Activated CD4-positive, alpha-beta memory T cell treated with anti-CD3 and anti-CD28 coated beads for 36 hours (primary cell): ENCODE measurements at regions of chr11 and their contacts with region 1.

Region 1: GRCh38 chr11:128379587-128380580 is 207.5 kb downstream of the ETS1 start:
- DNase-seq: peak; percentile 57
- H3K4me3 Mint-ChIP-seq: peak overlapping the region; percentile 11
- H3K27ac Mint-ChIP-seq: peak overlapping the region; percentile 56
- H3K4me1 Mint-ChIP-seq: peaks cover 41% of the 10 kb centered on the region
- H3K27me3 Mint-ChIP-seq: no peaks in the 10 kb centered on the region

Region 2: DNA sequence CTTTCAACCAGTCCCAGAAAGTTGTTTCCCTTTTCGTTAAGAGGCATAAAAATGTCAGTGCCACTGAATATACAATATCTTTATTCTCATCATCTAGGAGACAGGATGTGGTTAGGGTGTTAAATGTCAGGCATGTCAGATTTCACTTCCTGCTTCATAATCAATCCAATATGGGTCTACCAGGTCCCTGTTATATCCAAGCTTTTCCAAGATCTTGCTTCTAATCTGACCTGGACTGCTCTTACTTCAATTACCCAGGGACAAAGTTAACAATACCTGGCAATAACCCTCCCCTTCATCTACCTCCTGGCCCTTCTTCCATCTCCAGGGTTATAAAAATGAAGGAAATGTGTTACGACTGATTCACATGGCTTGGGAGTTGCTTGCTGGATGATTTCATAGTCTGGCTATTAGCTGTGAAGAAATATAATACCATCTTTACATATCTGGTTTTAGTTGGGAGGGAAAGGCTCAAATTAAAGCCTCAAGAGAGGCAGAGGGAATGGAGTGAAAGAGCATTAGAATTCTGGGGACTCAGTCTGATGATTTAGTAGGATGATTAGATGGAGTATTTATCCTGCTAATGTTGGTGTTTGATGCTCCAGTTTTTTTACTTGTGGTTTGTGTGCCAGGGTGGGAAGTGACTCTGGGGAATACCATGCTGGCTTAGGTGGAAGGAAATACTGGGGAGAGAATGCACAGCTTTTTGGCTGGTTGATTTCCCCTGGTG is 326.8 kb before region 1 on chr11:
- CTCF ChIA-PET with region 1: no interaction called
- POLR2A ChIA-PET with region 1: no interaction called
- intact Hi-C with region 1: no loop called
- DNase-seq: no peak
- H3K4me3 Mint-ChIP-seq: peak overlapping the region; percentile 70
- H3K27ac Mint-ChIP-seq: peak overlapping the region; percentile 94
- H3K4me1 Mint-ChIP-seq: peaks cover 67% of the 10 kb centered on the region
- H3K27me3 Mint-ChIP-seq: no peaks in the 10 kb centered on the region

Region 3: DNA sequence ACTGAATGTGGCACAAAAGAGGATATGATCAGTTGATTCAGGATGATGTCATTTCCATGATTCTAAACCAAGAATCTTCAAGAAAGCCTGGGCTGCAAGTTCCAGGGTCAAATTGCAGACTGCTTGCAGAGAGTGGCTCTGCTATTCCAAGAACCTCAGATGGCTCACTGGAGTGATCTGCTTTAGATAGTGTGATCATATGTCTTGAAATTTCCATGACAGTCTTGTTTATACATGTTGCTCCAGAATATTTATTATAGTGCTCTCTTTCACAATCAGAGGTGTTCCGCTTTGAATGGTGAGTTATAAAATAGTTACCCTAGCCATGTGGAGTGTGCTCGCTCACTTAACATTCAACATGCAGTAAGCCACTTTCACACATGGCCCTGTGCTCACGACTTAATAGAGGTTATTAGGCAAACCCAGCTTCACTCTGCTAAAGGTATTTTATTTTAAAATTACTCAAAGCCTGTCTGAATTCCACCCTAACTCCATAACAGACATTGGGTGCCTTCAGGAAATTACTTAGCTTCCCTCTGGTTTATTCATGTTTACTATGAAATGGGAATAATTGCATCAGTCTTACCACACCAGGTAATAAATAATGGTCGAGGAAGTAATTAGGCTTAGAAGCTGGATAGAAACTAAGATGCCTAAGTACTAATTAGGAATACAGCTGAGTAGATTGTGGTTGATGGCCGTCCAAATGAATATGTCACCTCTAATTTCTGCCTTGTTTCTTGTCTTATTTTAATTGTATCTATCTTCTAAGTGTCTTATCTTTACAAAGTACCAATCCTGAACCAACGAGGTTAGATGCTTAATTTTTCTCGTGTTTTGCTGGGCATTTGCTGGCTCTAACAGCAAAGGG is 19.6 kb after region 1 on chr11:
- CTCF ChIA-PET with region 1: interaction called, 3 read pairs
- POLR2A ChIA-PET with region 1: no interaction called
- intact Hi-C with region 1: loop called (anchors 2 kb)
- DNase-seq: peak; percentile 31
- H3K4me3 Mint-ChIP-seq: no peak overlapping the region
- H3K27ac Mint-ChIP-seq: peak overlapping the region; percentile 29
- H3K4me1 Mint-ChIP-seq: peaks cover 23% of the 10 kb centered on the region
- H3K27me3 Mint-ChIP-seq: no peaks in the 10 kb centered on the region

Region 4: GRCh38 chr11:128412847-128413791 is 33.2 kb after region 1 on chr11:
- CTCF ChIA-PET with region 1: no interaction called
- POLR2A ChIA-PET with region 1: no interaction called
- intact Hi-C with region 1: loop called (anchors 5 kb)
- DNase-seq: no peak
- H3K4me3 Mint-ChIP-seq: no peak overlapping the region
- H3K27ac Mint-ChIP-seq: peak overlapping the region; percentile 14
- H3K4me1 Mint-ChIP-seq: peaks cover 40% of the 10 kb centered on the region
- H3K27me3 Mint-ChIP-seq: no peaks in the 10 kb centered on the region

Region 5: GRCh38 chr11:128448200-128448886 is 68.5 kb after region 1 on chr11:
- CTCF ChIA-PET with region 1: no interaction called
- POLR2A ChIA-PET with region 1: interaction called, 4 read pairs
- intact Hi-C with region 1: loop called (anchors 5 kb)
- DNase-seq: no peak
- H3K4me3 Mint-ChIP-seq: no peak overlapping the region
- H3K27ac Mint-ChIP-seq: no peak overlapping the region
- H3K4me1 Mint-ChIP-seq: peaks cover 46% of the 10 kb centered on the region
- H3K27me3 Mint-ChIP-seq: no peaks in the 10 kb centered on the region